ENCODE measurements at regions of chr16 and their contacts with region 1.

Region 1: GRCh38 chr16:50806099-50807062 is 64.5 kb downstream of the CYLD start:
- DNase-seq: peak; percentile 90
- H3K4me3 Mint-ChIP-seq: peak overlapping the region; percentile 67
- H3K27ac Mint-ChIP-seq: peak overlapping the region; percentile 72
- H3K4me1 Mint-ChIP-seq: peaks cover 12% of the 10 kb centered on the region
- H3K27me3 Mint-ChIP-seq: no peaks in the 10 kb centered on the region

Region 2: GRCh38 chr16:50210266-50211038 is 595.9 kb before region 1 on chr16:
- CTCF ChIA-PET with region 1: interaction called, 24 read pairs
- POLR2A ChIA-PET with region 1: no interaction called
- intact Hi-C with region 1: loop called (anchors 10 kb)
- DNase-seq: peak; percentile 80
- H3K4me3 Mint-ChIP-seq: no peak overlapping the region
- H3K27ac Mint-ChIP-seq: peak overlapping the region; percentile 46
- H3K4me1 Mint-ChIP-seq: peaks cover 17% of the 10 kb centered on the region
- H3K27me3 Mint-ChIP-seq: no peaks in the 10 kb centered on the region

Region 3: DNA sequence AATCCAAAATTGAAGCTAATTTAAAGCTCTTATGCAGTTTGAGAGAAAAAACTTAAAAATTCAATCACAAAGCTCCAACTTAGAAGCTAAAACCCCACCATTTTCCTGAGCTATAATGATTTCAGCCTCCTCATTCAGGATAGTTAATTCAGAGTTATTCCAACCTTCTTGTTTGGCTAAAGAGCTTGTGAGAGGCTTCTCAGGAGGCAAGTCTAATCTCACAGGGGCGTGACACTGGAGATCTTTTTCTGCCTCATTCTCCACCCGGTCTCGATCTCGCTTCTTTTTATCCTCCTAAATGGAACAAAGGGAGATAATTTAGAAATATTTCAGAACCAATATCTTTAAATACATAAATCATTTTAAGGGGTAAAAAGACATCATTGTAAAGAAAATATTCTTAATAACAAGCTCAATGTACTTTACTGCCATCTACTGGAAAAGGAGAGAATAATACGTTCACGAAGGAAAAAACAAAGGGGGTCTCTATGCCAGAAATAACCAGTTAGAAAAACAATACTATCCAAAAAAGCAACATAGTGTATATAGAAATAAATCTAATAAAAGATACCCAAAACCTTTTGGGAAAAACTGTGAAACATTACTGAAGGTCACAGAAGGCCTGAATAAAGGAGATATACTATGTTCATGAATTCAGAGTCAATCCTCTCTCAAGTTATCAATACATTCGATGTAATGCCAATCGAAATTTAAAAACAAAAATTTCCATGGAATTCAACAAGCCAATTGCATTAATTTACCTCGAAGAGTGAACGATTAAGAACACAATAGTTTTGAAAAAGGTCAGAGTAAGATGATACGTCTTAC is 451.5 kb before region 1 on chr16:
- CTCF ChIA-PET with region 1: interaction called, 24 read pairs
- POLR2A ChIA-PET with region 1: no interaction called
- intact Hi-C with region 1: no loop called
- DNase-seq: no peak
- H3K4me3 Mint-ChIP-seq: no peak overlapping the region
- H3K27ac Mint-ChIP-seq: no peak overlapping the region
- H3K4me1 Mint-ChIP-seq: peaks cover 30% of the 10 kb centered on the region
- H3K27me3 Mint-ChIP-seq: no peaks in the 10 kb centered on the region

Region 4: GRCh38 chr16:50548125-50548908 is 258.1 kb before region 1 on chr16 and contains the start of gene NKD1:
- CTCF ChIA-PET with region 1: interaction called, 17 read pairs
- POLR2A ChIA-PET with region 1: no interaction called
- intact Hi-C with region 1: loop called (anchors 1 kb)
- DNase-seq: peak; percentile 80
- H3K4me3 Mint-ChIP-seq: peak within 1 kb of the TSS; percentile 84
- H3K27ac Mint-ChIP-seq: peak within 1 kb of the TSS; percentile 9
- H3K4me1 Mint-ChIP-seq: peaks cover 7% of the 10 kb centered on the region
- H3K27me3 Mint-ChIP-seq: no peaks in the 10 kb centered on the region
- total RNA-seq, gene NKD1: 0.67 to 1.6 TPM

Region 5: GRCh38 chr16:50560903-50561863 is 245.2 kb before region 1 on chr16:
- CTCF ChIA-PET with region 1: no interaction called
- POLR2A ChIA-PET with region 1: no interaction called
- intact Hi-C with region 1: no loop called
- DNase-seq: no peak
- H3K4me3 Mint-ChIP-seq: no peak overlapping the region
- H3K27ac Mint-ChIP-seq: no peak overlapping the region
- H3K4me1 Mint-ChIP-seq: no peaks in the 10 kb centered on the region
- H3K27me3 Mint-ChIP-seq: no peaks in the 10 kb centered on the region

Region 6: DNA sequence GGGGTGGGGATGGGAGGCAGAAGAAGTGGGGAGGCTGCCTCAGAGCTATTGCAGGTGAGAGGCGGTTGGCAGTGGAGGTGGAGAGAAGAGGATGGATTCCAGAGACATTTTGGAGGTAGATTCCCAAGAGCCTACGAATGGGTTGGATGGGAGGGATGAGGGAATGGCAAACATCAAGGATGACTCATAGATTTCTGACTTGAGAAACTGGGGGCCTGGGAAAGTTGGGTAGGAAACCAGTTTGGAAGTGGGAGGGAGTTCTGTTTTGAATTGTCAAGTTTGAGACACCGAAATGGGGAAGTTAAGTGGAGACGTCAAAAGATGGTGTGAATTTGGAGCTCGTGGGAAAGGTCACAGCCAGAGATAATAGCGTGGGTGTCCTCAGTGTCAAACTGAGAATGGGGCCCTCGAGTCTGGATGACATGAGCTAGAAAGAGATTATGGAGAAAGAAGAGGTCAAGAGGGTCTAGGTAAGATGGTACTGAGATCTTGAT is 70.7 kb before region 1 on chr16:
- CTCF ChIA-PET with region 1: interaction called, 13 read pairs
- POLR2A ChIA-PET with region 1: no interaction called
- intact Hi-C with region 1: no loop called
- DNase-seq: peak; percentile 61
- H3K4me3 Mint-ChIP-seq: no peak overlapping the region
- H3K27ac Mint-ChIP-seq: peak overlapping the region; percentile 10
- H3K4me1 Mint-ChIP-seq: peaks cover 54% of the 10 kb centered on the region
- H3K27me3 Mint-ChIP-seq: no peaks in the 10 kb centered on the region

Region 7: GRCh38 chr16:50776037-50776436 is 30.3 kb before region 1 on chr16:
- CTCF ChIA-PET with region 1: interaction called, 33 read pairs
- POLR2A ChIA-PET with region 1: no interaction called
- intact Hi-C with region 1: loop called (anchors 1 kb)
- DNase-seq: no peak
- H3K4me3 Mint-ChIP-seq: no peak overlapping the region
- H3K27ac Mint-ChIP-seq: no peak overlapping the region
- H3K4me1 Mint-ChIP-seq: peaks cover 78% of the 10 kb centered on the region
- H3K27me3 Mint-ChIP-seq: no peaks in the 10 kb centered on the region